ENCODE measurements at regions of chr15 and their contacts with region 1.

Region 1: GRCh38 chr15:63188926-63189871 is at the start of gene RAB8B:
- DNase-seq: peak; percentile 94
- H3K4me3 ChIP-seq: peak within 1 kb of the TSS; percentile 72 to 95 (median 88)
- H3K27ac ChIP-seq: peak within 1 kb of the TSS; percentile 55
- H3K4me1 ChIP-seq: peaks cover 48% of the 10 kb centered on the region
- H3K27me3 ChIP-seq: no peaks in the 10 kb centered on the region
- CTCF ChIP-seq: no peak
- total RNA-seq, gene RAB8B: 20.6 to 36.3 TPM

Region 2: GRCh38 chr15:63111481-63111880 is 77.7 kb before region 1 on chr15:
- CTCF ChIA-PET with region 1: no interaction called
- dilution Hi-C with region 1: no loop called
- in situ Hi-C with region 1: no loop called
- intact Hi-C with region 1: no loop called
- DNase-seq: no peak
- H3K4me3 ChIP-seq: no peak overlapping the region
- H3K27ac ChIP-seq: no peak overlapping the region
- H3K4me1 ChIP-seq: peaks cover 6% of the 10 kb centered on the region
- H3K27me3 ChIP-seq: no peaks in the 10 kb centered on the region
- CTCF ChIP-seq: no peak

Region 3: DNA sequence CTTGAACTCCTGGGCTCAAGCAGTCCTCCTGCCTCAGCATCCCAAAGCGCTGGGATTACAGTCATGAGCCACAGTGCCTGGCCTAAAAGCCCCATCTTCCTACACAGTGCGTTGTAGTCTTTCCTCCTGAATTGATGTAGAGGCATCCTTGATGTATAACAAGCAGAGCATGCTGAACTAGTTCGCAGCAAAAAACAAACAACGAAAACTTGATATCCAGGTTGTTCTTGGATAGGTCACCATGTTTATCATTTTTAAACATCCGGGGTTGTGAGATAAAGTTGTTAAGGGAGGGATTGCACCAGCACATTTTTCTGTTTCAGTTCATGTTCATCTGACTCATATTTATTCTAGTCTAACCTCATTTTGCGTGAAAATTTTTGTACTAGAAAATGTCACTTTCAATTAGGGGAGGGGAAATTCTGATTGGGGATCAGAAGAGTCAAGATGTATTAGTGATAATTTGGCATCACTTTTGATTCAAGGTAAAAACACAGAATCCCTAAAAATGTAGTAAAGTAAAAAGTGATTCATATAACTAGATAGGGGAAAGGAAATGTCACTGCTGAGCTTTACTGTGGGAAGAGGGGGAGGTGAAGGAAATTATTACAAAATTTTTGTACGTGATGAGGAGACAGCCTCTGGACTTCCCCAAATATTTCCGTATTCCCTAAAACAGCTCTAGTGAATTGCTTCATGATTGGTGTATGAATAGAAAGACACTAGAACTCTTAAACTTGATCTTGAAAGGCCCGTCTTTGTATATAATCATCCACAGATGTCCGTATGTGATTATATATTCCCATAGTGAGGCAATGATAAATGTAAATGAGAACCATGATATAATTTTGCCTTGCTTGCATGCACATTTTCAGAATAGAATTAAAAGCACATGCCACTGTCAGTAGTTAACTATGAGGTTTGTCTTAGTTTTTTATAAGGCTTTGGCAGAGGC is 23.1 kb after region 1 on chr15:
- CTCF ChIA-PET with region 1: no interaction called
- dilution Hi-C with region 1: no loop called
- in situ Hi-C with region 1: no loop called
- intact Hi-C with region 1: loop called (anchors 2 kb)
- DNase-seq: no peak
- H3K4me3 ChIP-seq: no peak overlapping the region
- H3K27ac ChIP-seq: no peak overlapping the region
- H3K4me1 ChIP-seq: peaks cover 4% of the 10 kb centered on the region
- H3K27me3 ChIP-seq: no peaks in the 10 kb centered on the region
- CTCF ChIP-seq: no peak

Region 4: DNA sequence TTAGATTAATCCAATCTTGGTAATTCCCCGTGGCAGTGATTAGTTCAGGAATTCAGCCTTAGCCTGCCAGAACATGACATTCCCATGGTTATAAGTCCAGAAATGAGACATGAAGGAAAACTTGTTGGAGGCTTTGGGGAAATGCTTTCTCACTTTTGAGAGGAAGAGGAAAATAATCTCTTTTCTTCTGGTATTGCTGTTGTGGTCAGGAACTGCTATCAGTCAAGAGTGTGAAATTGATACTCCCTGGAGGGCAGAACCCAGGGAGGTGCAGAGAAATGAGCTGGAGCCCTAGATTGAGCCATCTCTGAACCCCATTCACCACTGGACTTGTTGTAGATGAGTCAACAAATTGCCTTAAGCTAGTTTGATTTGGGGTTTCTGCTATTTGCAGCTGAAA is 49.6 kb after region 1 on chr15:
- CTCF ChIA-PET with region 1: no interaction called
- dilution Hi-C with region 1: no loop called
- in situ Hi-C with region 1: no loop called
- intact Hi-C with region 1: loop called (anchors 5 kb)
- DNase-seq: peak; percentile 94
- H3K4me3 ChIP-seq: no peak overlapping the region
- H3K27ac ChIP-seq: peak overlapping the region; percentile 67
- H3K4me1 ChIP-seq: peaks cover 52% of the 10 kb centered on the region
- H3K27me3 ChIP-seq: no peaks in the 10 kb centered on the region
- CTCF ChIP-seq: no peak

Region 5: GRCh38 chr15:63250312-63250965 is 61.2 kb after region 1 on chr15:
- CTCF ChIA-PET with region 1: no interaction called
- dilution Hi-C with region 1: no loop called
- in situ Hi-C with region 1: no loop called
- intact Hi-C with region 1: loop called (anchors 5 kb)
- DNase-seq: peak; percentile 98
- H3K4me3 ChIP-seq: no peak overlapping the region
- H3K27ac ChIP-seq: peak overlapping the region; percentile 69
- H3K4me1 ChIP-seq: peaks cover 33% of the 10 kb centered on the region
- H3K27me3 ChIP-seq: no peaks in the 10 kb centered on the region
- CTCF ChIP-seq: no peak

Region 6: GRCh38 chr15:63277038-63277892 is 88.1 kb after region 1 on chr15 and contains the start of gene APH1B:
- CTCF ChIA-PET with region 1: no interaction called
- dilution Hi-C with region 1: no loop called
- in situ Hi-C with region 1: no loop called
- intact Hi-C with region 1: loop called (anchors 1 kb)
- DNase-seq: peak; percentile 56
- H3K4me3 ChIP-seq: peak within 1 kb of the TSS; percentile 84 to 97 (median 85)
- H3K27ac ChIP-seq: peak within 1 kb of the TSS; percentile 66
- H3K4me1 ChIP-seq: peaks cover 13% of the 10 kb centered on the region
- H3K27me3 ChIP-seq: no peaks in the 10 kb centered on the region
- CTCF ChIP-seq: peak in 1 of 2 donors; percentile 10
- total RNA-seq, gene APH1B: 15.8 to 18.4 TPM

Measured in mammary epithelial cell (primary cell).